ENCODE measurements at regions of chr1 and their contacts with region 1.

Region 1: DNA sequence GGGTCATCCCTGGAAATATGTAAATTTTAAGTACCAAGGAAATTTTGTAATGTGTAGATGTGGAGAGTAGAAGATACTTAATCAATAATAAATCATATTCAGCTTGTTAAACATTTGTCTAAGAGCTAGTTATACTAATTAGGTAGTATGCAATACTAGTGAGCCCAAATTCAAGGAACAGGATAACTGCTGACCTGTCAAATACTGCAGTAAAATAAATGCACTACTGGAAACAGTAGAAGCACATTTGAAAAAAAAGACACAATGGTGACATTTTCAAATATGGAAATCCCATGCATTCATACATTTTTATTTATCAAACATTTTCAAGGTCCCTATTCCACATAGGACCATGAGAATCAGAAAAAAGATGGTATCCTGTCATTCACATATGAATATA is 27.2 kb downstream of the EPRS1 start:
- DNase-seq: no peak
- H3K4me3 ChIP-seq: no peak overlapping the region
- H3K27ac ChIP-seq: no peak overlapping the region
- H3K4me1 ChIP-seq: no peaks in the 10 kb centered on the region
- H3K27me3 ChIP-seq: no peaks in the 10 kb centered on the region
- CTCF ChIP-seq: no peak
- POLR2A ChIP-seq: no peak

Region 2: DNA sequence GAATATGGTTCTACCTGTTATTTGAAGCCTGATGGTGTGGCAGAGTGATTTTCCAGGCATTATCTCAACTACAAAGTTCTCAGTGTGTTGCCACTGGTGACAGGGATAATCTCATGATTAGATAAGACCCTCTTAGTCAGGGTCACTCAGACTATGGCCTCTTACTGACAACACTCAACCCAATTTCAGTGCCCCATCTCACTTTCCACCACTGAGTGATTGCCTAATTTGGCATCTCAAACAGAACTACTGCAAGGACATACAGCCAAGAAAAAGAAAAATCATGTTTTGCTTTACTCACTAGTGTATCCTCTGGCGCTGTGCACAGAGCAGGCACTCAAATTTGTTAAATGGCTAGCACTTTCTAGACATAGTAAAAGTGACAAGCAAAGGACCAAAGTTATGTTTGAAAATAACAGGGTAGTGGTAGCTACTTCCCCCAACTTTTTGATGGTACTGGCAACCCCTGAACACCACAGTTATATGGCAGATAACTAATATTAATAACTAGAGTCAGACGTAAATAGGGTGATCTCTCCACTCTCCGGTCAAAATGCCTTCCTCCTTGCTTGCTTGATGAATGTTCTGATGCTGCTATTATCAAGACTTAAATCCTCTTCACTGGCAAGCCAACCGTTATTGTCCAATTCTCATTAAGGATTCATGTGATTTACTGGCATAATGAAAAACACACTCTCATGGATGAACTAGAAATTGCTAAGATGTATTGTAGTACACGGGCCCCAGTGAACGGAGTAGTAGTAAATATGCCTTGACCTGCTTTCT is 53.6 kb before region 1 on chr1:
- intact Hi-C with region 1: loop called (anchors 2 kb)
- DNase-seq: no peak
- H3K4me3 ChIP-seq: no peak overlapping the region
- H3K27ac ChIP-seq: no peak overlapping the region
- H3K4me1 ChIP-seq: no peaks in the 10 kb centered on the region
- H3K27me3 ChIP-seq: no peaks in the 10 kb centered on the region
- CTCF ChIP-seq: no peak
- POLR2A ChIP-seq: no peak